AG04449 (cell line): ENCODE measurements at regions of chr1 and their contacts with region 1.

Region 1: DNA sequence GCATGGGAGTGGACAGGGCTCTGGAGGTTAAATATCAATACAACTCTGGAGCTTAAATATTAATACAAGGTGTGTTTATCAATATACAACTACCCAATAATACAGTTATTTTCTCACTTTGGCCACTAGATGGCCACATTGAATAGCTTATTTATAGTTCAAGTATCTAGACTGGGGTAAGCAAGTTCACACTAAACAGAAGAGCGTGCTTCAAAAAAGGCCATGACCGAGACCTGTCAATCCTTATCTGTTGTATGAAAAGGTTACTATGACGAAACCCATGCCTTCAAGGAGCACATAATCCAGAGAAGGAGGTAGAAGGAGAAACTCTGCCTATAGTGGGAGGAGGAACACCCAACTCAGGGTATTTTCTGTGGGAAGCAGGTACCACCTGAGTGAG is 29.1 kb downstream of the CHML start:
- DNase-seq: no peak
- H3K4me3 ChIP-seq: no peak overlapping the region
- CTCF ChIP-seq: peak; percentile 44

Region 2: GRCh38 chr1:241464985-241465384 is 146.1 kb before region 1 on chr1:
- CTCF ChIA-PET with region 1: no interaction called
- POLR2A ChIA-PET with region 1: no interaction called
- DNase-seq: no peak
- H3K4me3 ChIP-seq: no peak overlapping the region
- CTCF ChIP-seq: no peak

Region 3: GRCh38 chr1:241519308-241520079 is 91.6 kb before region 1 on chr1 and contains the start of gene FH:
- CTCF ChIA-PET with region 1: no interaction called
- POLR2A ChIA-PET with region 1: no interaction called
- DNase-seq: peak; percentile 88
- H3K4me3 ChIP-seq: peak within 1 kb of the TSS; percentile 81
- CTCF ChIP-seq: no peak

Region 4: DNA sequence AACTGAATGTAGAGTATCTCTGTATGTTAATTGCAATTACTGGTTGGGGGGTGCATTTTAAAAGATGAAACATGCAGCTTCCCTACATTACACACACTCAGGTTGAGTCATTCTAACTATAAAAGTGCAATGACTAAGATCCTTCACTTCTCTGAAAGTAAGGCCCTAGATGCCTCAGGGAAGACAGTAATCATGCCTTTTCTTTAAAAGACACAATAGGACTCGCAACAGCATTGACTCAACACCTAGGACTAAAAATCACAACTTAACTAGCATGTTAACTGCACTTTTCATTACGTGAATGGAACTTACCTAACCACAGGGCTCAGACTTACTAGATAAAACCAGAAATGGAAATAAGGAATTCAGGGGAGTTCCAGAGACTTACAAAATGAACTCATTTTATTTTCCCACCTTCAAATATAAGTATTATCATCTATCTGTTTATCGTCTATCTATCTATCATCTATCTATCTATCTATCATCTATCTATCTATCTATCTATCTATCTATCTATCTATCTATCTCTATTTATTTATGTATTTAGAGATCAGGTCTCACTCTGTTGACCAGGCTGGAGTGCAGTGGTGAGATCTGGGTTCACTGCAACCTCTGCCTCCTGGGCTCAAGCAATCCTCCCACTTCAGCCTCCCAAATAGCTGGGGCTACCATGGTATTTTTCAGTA is 18.6 kb before region 1 on chr1:
- CTCF ChIA-PET with region 1: interaction called, 18 read pairs
- POLR2A ChIA-PET with region 1: no interaction called
- DNase-seq: no peak
- H3K4me3 ChIP-seq: no peak overlapping the region
- CTCF ChIP-seq: no peak

Region 5: GRCh38 chr1:241627453-241628259 is 16.6 kb after region 1 on chr1:
- CTCF ChIA-PET with region 1: interaction called, 84 read pairs
- POLR2A ChIA-PET with region 1: no interaction called
- DNase-seq: peak; percentile 46
- H3K4me3 ChIP-seq: no peak overlapping the region
- CTCF ChIP-seq: peak; percentile 56

Region 6: DNA sequence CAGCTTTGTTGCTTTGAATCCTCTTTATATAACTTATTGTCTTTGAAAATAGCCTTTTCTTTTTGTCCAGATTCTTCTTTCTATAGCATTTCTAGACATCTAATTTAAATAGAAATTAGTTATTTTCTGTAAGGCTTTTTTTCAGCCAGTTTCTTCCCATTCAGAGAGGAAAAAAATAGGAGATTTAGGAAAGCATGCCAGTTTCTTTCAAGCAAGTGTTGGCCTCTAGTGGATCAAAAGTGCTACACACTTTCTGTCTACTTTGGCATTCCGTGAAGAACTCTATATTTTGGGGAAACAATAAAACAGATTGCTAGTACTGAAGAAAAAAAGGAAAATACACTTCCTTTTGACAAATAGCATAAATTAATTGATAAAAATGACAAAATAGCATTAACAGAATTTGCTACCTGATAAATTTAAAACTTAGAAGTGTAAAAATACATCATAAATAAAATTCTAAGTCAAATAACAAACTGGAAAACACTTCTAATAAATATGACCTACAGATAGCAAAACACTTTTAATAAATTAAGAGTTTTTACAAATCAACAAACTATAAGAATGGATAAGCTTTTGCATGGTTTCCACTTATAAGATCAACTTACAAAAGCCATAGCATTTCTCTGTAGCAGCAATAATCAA is 223.8 kb after region 1 on chr1:
- CTCF ChIA-PET with region 1: interaction called, 73 read pairs
- POLR2A ChIA-PET with region 1: interaction called, 3 read pairs
- DNase-seq: no peak
- H3K4me3 ChIP-seq: no peak overlapping the region
- CTCF ChIP-seq: peak; percentile 64

Region 7: DNA sequence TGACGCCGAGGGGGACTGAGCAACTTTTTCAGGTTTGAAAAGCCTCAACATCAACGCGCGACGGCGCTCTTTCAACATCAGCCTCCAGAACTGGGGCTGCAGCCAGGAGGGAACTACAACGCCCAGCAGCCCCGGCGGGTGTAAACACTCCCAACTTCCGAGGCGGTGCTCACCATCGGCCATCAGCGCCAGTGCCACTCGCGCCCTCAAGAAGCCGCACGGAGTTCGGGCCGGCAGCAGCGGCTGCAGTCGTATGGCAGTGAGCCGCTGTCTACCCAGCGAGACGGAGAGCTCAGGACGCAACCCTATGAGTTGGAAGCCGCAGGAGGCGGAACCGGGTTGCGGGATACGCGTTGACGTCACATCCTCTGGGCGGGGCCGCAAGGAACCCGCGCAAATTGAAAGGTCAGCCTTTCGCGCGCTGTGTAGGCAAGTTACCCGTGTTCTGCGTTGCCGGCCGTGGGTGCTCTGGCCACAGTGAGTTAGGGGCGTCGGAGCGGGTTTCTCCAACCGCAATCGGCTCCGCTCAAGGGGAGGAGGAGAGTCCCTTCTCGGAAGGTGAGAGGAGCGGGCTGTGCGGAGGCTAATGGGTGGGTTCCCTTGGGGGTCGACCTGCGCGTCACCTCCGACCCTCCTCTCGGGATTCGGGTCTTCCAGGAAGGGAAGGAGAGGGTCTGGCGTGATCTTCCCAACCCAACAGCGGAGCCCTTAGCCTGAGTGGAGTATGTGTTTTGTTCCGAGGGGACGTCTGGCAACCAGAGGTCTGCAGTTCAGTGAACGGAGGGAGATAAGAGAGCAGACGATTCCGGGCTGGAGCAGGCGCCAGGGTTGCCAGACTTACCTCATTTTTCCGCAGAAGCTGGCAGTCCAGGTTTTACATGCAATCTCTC is 237.0 kb after region 1 on chr1 and contains the start of gene EXO1:
- CTCF ChIA-PET with region 1: interaction called, 45 read pairs
- POLR2A ChIA-PET with region 1: interaction called, 3 read pairs
- DNase-seq: no peak
- H3K4me3 ChIP-seq: peak within 1 kb of the TSS; percentile 97
- CTCF ChIP-seq: peak; percentile 33

Region 8: GRCh38 chr1:241998412-241998921 is 387.4 kb after region 1 on chr1:
- CTCF ChIA-PET with region 1: interaction called, 14 read pairs
- POLR2A ChIA-PET with region 1: no interaction called
- DNase-seq: no peak
- H3K4me3 ChIP-seq: peak overlapping the region; percentile 54
- CTCF ChIP-seq: peak; percentile 77